Mammary epithelial cell (primary cell): ENCODE measurements at regions of chr19 and their contacts with region 1.

Region 1: GRCh38 chr19:51473009-51473707 is 5.2 kb upstream of the CEACAM18 start:
- DNase-seq: peak; percentile 50
- H3K4me3 ChIP-seq: no peak overlapping the region
- H3K27ac ChIP-seq: no peak overlapping the region
- H3K4me1 ChIP-seq: peaks cover 11% of the 10 kb centered on the region
- H3K27me3 ChIP-seq: no peaks in the 10 kb centered on the region
- CTCF ChIP-seq: peak; percentile 83

Region 2: GRCh38 chr19:51439021-51439465 is 34.1 kb before region 1 on chr19:
- CTCF ChIA-PET with region 1: no interaction called
- dilution Hi-C with region 1: loop called (anchors 5 kb)
- in situ Hi-C with region 1: no loop called
- intact Hi-C with region 1: no loop called
- DNase-seq: peak; percentile 18
- H3K4me3 ChIP-seq: no peak overlapping the region
- H3K27ac ChIP-seq: no peak overlapping the region
- H3K4me1 ChIP-seq: no peaks in the 10 kb centered on the region
- H3K27me3 ChIP-seq: no peaks in the 10 kb centered on the region
- CTCF ChIP-seq: peak in 1 of 2 donors; percentile 50

Region 3: DNA sequence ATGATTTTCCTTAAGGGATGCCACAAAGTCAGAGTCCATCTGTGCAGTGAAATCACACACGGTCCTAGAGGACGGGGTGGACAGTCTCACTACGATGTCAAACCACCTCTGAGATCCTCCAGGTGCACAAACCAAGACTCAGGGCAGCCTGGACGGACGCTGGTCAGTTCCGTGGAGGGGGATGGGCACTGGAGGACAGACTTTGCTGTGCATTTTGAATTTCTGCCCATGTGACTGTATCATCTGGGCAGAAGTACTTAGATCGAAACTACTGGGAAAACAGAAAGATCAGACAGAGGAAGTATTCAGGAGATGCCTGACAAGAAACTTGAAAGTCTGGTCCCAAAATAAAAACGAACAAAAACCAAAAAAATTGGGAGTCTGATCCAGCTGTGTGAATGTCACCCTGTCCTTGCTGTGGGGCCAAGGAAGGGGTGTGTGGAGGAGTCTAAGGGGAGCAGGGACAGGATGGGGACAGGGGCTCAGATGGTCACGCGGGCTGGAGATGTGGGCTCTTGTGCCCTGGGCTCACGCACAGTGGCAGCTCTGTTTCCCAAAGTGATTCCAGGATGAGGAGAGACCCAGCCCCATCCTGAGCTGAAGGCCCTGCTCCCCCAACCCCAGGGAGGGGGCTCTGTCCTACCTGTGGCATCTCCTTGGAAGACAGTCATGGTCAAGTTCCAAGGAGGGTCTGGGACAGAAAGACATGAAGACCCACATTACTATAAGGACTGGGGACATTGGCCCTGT is 16.4 kb before region 1 on chr19:
- CTCF ChIA-PET with region 1: no interaction called
- dilution Hi-C with region 1: no loop called
- in situ Hi-C with region 1: no loop called
- intact Hi-C with region 1: no loop called
- DNase-seq: no peak
- H3K4me3 ChIP-seq: no peak overlapping the region
- H3K27ac ChIP-seq: no peak overlapping the region
- H3K4me1 ChIP-seq: no peaks in the 10 kb centered on the region
- H3K27me3 ChIP-seq: no peaks in the 10 kb centered on the region
- CTCF ChIP-seq: no peak

Region 4: DNA sequence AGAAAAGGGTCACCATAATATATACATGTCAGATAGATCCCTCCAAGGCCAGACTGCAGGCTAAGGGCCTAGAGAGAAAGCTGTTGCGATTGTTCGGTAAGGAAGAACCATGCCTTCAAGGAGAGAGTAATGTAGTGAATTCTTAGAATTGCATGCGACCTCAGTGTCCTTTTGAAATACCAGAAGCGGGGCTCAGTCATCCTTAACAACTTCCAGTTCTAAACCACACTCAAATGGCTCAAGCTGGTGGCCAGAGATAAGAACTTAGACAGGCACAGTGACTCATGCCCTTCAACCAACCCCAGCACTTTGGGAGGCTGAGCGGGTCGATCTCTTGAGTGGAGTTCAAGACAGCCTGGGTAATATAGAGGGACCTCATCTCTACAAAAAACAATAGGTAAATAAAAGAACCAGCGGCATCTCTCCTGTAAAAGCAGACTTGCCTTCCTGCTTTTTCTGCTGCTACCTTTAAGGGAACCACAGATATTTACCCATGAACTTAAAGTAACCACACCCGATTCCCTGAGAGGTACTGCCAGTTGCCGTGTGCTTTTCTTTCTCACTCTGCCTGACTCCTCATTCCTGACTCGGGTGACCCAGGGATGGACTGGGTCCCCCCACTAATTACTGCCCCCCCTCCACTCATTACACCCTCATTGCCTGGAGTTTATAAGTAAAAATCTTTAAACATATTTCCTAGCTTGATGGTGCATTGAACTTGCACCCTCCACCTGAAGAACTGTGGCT is 73.7 kb after region 1 on chr19:
- CTCF ChIA-PET with region 1: no interaction called
- dilution Hi-C with region 1: loop called (anchors 5 kb)
- in situ Hi-C with region 1: no loop called
- intact Hi-C with region 1: no loop called
- DNase-seq: no peak
- H3K4me3 ChIP-seq: no peak overlapping the region
- H3K27ac ChIP-seq: no peak overlapping the region
- H3K4me1 ChIP-seq: no peaks in the 10 kb centered on the region
- H3K27me3 ChIP-seq: no peaks in the 10 kb centered on the region
- CTCF ChIP-seq: no peak

Region 5: GRCh38 chr19:51651216-51651846 is 178.2 kb after region 1 on chr19:
- CTCF ChIA-PET with region 1: interaction called, 12 read pairs
- dilution Hi-C with region 1: no loop called
- in situ Hi-C with region 1: loop called (anchors 10 to 25 kb)
- intact Hi-C with region 1: no loop called
- DNase-seq: no peak
- H3K4me3 ChIP-seq: no peak overlapping the region
- H3K27ac ChIP-seq: no peak overlapping the region
- H3K4me1 ChIP-seq: no peaks in the 10 kb centered on the region
- H3K27me3 ChIP-seq: no peaks in the 10 kb centered on the region
- CTCF ChIP-seq: no peak

Region 6: GRCh38 chr19:51777570-51778462 is 304.7 kb after region 1 on chr19:
- CTCF ChIA-PET with region 1: no interaction called
- dilution Hi-C with region 1: no loop called
- in situ Hi-C with region 1: loop called in 1 of 2 experiments (anchors 25 kb)
- intact Hi-C with region 1: loop called (anchors 1 kb)
- DNase-seq: peak; percentile 68
- H3K4me3 ChIP-seq: no peak overlapping the region
- H3K27ac ChIP-seq: no peak overlapping the region
- H3K4me1 ChIP-seq: no peaks in the 10 kb centered on the region
- H3K27me3 ChIP-seq: no peaks in the 10 kb centered on the region
- CTCF ChIP-seq: peak; percentile 62 to 72